ENCODE measurements at regions of chr1 and their contacts with region 1.

Region 1: GRCh38 chr1:28736450-28737306 is at the start of gene YTHDF2:
- DNase-seq: peak; percentile 99
- ATAC-seq: peak; percentile 99
- H3K4me3 ChIP-seq: peak within 1 kb of the TSS; percentile 89 to 91
- H3K27ac ChIP-seq: peak within 1 kb of the TSS; percentile 22 to 78
- H3K4me1 ChIP-seq: no peaks in the 10 kb centered on the region
- H3K27me3 ChIP-seq: no peaks in the 10 kb centered on the region
- total RNA-seq, gene YTHDF2: 40.1 to 46.5 TPM

Region 2: GRCh38 chr1:28581536-28582247 is 155.0 kb before region 1 on chr1:
- intact Hi-C with region 1: loop called in 1 of 2 experiments (anchors 2 kb)
- DNase-seq: peak; percentile 98
- ATAC-seq: peak; percentile 99
- H3K4me3 ChIP-seq: peak overlapping the region; percentile 62 to 83
- H3K27ac ChIP-seq: peak overlapping the region in 1 of 2 donors; percentile 87
- H3K4me1 ChIP-seq: peaks cover 0 to 4% of the 10 kb centered on the region in 2 donors
- H3K27me3 ChIP-seq: peaks cover 0 to 1% of the 10 kb centered on the region in 2 donors

Region 3: GRCh38 chr1:28648474-28649198 is 88.0 kb before region 1 on chr1 and contains the start of gene RNU11:
- intact Hi-C with region 1: loop called (anchors 2 to 5 kb)
- DNase-seq: peak; percentile 86 to 92
- ATAC-seq: peak; percentile 93
- H3K4me3 ChIP-seq: peak within 1 kb of the TSS in 1 of 2 donors; percentile 44
- H3K27ac ChIP-seq: peak within 1 kb of the TSS; percentile 83 to 90
- H3K4me1 ChIP-seq: no peaks in the 10 kb centered on the region
- H3K27me3 ChIP-seq: no peaks in the 10 kb centered on the region
- total RNA-seq, gene RNU11: not detected

Region 4: DNA sequence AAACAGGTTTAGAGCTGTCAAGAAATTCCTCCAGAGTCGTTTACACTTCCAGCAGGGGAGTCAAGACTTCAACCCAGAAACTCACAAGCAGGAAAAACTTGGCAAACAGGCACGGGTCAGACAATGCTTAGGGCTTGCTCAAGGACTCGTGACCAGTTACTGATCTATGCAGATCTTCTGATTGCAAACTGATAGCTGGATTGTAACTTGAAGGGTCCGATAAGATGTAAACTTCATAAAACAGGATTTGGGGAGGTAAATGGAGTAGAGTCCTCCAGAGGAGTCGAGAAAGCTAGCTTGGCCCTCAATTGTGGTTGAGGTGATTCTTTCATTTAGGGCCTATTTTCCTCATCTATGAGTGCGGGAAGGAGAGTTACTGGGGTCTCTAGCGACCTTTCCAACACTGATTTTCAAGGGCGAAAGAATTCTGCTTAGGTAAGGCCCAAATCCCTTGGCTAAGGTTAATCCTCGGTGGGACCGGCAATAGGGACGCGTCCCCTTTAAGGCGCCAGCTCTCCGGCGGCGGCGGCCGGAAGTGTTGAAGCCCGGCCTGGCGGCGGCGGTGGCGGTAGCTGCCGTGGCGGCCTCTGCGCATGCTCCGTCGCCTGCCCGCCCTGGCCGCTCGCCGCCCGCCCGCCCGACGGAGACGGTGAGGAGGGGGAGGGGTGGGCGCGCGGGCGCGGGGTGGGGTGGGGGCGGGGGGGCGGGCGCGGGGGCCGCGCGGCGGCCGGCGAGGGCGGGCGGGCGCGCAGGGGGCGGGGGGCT is 68.3 kb before region 1 on chr1 and contains the start of gene GMEB1:
- intact Hi-C with region 1: loop called in 1 of 2 experiments (anchors 5 kb)
- DNase-seq: peak; percentile 92 to 95
- ATAC-seq: peak; percentile 94
- H3K4me3 ChIP-seq: peak within 1 kb of the TSS; percentile 99 to 100
- H3K27ac ChIP-seq: peak within 1 kb of the TSS; percentile 97 to 99
- H3K4me1 ChIP-seq: no peaks in the 10 kb centered on the region
- H3K27me3 ChIP-seq: no peaks in the 10 kb centered on the region
- total RNA-seq, gene GMEB1: 11.1 to 11.9 TPM

Measured in aorta (tissue), 5 donors.